ENCODE measurements at regions of chr6 and their contacts with region 1.

Region 1: GRCh38 chr6:19032591-19033295 is 645.6 kb downstream of the RNF144B start:
- DNase-seq: no peak
- H3K4me3 ChIP-seq: no peak overlapping the region
- H3K27ac ChIP-seq: no peak overlapping the region
- H3K4me1 ChIP-seq: no peaks in the 10 kb centered on the region
- CTCF ChIP-seq: no peak

Region 2: DNA sequence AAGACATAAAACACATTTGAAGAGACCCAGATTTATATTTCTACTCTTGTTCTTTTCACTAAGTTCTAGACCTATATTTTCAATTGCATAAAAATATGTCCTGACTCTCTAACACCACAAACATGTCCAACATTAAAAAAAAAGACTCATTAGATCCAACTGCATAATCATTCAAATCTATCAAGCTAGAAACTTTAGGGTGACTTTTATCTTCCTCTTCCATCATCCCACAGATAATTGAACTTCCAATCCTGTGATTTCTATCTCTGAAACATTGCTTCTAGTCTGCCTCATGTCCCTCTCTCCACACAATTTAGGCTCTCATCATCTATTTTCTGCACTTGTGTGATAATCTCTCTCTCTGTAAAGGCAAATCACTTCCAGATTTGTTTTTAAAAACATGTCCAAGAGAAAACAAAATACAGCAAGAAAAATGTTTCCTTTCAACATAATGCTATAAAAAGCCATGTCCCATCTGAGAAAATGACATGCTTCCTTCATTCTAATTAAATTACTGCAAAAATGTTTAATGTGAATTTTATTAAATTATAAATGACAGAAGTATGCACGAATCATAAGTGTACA is 29.7 kb before region 1 on chr6:
- CTCF ChIA-PET with region 1: no interaction called
- POLR2A ChIA-PET with region 1: no interaction called
- intact Hi-C with region 1: no loop called
- DNase-seq: no peak
- H3K4me3 ChIP-seq: no peak overlapping the region
- H3K27ac ChIP-seq: no peak overlapping the region
- H3K4me1 ChIP-seq: no peaks in the 10 kb centered on the region
- CTCF ChIP-seq: no peak

Region 3: GRCh38 chr6:19059102-19059501 is 26.4 kb after region 1 on chr6:
- CTCF ChIA-PET with region 1: no interaction called
- POLR2A ChIA-PET with region 1: no interaction called
- intact Hi-C with region 1: loop called (anchors 1 kb)
- DNase-seq: no peak
- H3K4me3 ChIP-seq: no peak overlapping the region
- H3K27ac ChIP-seq: no peak overlapping the region
- H3K4me1 ChIP-seq: no peaks in the 10 kb centered on the region
- CTCF ChIP-seq: no peak

Measured in OCI-LY7 (cell line).